WTC11 (cell line): ENCODE measurements at regions of chr11 and their contacts with region 1.

Region 1: GRCh38 chr11:46064221-46064620 is 57.0 kb downstream of the PHF21A start:
- DNase-seq: no peak
- ATAC-seq: no peak
- H3K4me3 Mint-ChIP-seq: no peak overlapping the region
- H3K27ac Mint-ChIP-seq: no peak overlapping the region; the same call in 1 of the 2 replicates
- H3K4me1 Mint-ChIP-seq: peaks cover 16% of the 10 kb centered on the region
- H3K27me3 Mint-ChIP-seq: no peaks in the 10 kb centered on the region
- CTCF ChIP-seq: no peak

Region 2: GRCh38 chr11:46006418-46007070 is 57.7 kb before region 1 on chr11:
- CTCF ChIA-PET with region 1: no interaction called
- POLR2A ChIA-PET with region 1: no interaction called
- DNase-seq: no peak
- ATAC-seq: peak; percentile 74
- H3K4me3 Mint-ChIP-seq: no peak overlapping the region
- H3K27ac Mint-ChIP-seq: peak overlapping the region; percentile 58
- H3K4me1 Mint-ChIP-seq: peaks cover 52% of the 10 kb centered on the region
- H3K27me3 Mint-ChIP-seq: no peaks in the 10 kb centered on the region
- CTCF ChIP-seq: peak; percentile 61

Region 3: GRCh38 chr11:46075168-46075567 is 10.9 kb after region 1 on chr11:
- CTCF ChIA-PET with region 1: interaction called, 20 read pairs
- POLR2A ChIA-PET with region 1: no interaction called
- DNase-seq: no peak
- ATAC-seq: no peak
- H3K4me3 Mint-ChIP-seq: no peak overlapping the region
- H3K27ac Mint-ChIP-seq: no peak overlapping the region; the same call in 1 of the 2 replicates
- H3K4me1 Mint-ChIP-seq: peaks cover 11% of the 10 kb centered on the region
- H3K27me3 Mint-ChIP-seq: no peaks in the 10 kb centered on the region
- CTCF ChIP-seq: no peak